ENCODE measurements at regions of chr19 and their contacts with region 1.

Region 1: GRCh38 chr19:47296036-47296435 is 13.6 kb upstream of the C5AR1 start:
- DNase-seq: peak; percentile 68
- ATAC-seq: peak; percentile 73 to 86

Region 2: DNA sequence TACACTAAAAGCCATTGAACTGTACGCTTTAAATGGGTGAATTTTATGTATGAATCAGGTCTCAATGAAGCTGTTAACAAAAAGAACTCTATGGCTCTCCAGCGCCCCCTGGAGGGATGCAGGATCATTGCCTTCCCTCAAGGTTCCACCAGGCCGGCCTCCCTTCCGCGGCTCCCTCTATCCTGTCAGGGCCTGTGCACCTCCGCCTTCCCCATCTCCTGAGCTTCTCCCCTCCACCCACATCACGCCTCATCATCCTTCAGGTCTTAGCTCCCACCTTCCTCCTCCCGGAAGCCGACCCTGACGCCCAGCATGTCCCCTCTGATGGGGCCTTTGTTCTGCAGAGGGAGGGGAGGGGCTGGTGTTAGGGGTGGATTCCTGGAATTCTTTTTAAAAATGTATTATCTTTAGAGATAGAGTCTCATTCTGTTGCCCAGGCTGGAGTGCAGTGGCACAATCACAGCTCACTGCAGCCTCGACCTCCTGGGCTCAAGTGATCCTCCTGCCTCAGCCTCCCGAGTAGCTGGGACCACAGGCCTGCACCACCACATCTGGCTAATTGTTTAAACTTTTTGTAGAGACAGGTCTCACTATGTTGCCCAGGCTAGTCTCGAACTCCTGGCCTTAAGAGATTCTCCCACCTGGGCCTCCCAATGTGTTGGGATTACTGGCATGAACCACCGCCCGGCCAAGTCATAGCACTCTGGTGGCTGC is 95.6 kb after region 1 on chr19:
- intact Hi-C with region 1: loop called (anchors 2 to 5 kb)
- DNase-seq: peak; percentile 75
- ATAC-seq: peak; percentile 57 to 78

Region 3: DNA sequence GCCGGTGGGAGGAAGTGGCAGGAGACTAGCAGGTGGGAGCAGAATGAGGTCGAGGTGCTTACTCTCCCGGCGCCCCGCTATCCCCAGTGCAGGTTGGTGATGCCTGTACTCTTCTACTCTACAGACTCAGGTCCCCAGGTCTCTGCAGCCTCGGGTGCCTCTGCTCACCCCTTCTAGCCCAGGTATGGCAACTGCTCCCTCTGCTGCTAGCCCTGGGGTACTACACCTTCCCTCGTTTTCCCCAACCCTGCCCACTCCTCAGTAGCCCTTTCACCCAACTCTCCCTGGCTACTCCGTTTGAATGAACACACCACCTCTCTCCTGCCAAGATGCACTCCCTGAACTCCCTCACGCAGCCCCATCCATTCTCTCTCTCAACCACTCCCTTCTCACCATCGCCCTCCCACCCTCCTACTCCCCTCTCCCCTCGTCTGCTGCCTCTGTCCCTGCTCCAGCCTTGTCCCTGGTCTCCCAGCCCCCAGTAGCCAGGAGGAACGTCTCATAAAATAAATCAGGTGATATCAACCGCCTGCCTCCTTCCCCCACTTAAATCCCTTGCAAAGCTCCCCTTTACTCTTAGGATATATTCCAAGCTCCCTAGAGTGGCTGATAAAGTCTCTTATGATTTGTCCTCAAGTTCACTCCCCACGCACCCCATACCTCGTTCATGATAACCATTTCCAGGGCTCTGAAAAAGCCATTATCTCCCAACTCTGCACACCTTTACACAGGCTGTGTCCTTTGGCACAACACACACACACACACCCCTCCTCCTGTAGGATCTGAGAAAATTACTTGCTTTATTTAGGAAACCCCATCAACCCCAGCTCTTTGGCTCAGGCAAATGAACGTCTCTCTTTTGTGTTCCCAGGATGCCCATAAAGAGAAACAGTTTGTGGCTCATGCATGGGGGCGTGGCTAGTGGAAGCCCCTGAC is 131.5 kb after region 1 on chr19:
- intact Hi-C with region 1: loop called in 1 of 2 experiments (anchors 2 kb)
- DNase-seq: no peak
- ATAC-seq: peak; percentile 67 to 70

Region 4: DNA sequence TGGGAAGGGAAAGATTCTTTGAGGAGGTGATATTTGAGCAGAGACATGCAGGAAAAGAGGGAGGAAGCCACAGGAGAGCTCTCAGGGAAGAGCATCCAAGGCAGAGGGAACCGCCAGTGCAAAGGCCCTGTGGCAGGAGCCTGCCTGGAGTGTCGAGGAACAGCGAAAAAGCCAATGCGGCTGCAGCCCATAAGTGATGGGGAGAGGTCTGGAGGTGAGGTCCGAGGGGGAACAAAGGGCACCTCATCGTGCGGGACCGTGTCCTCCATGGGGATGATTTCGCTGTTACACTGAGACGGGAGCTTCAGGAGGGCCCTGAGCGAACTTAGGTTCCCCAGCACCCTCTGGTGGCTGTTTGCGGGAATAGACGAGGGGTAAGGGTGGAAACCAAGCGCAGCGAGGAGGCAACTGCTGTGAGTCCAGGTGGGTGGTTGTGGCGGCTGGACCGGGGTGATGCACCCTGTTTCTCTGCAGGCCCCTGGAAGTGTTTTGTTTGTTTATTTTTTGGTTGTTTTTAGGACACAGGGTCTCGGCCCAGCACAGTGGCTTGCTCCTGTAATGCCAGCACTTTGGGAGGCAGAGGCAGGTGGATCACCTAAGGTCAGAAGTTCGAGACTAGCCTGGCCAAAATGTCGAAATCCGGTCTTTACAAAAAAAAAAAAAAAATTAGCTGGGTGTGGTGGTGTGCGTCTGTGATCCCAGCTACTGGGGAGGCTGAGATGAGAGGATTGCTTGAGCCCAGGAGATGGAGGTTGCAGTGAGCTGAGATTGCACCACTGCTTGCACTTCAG is 411.3 kb after region 1 on chr19:
- intact Hi-C with region 1: loop called in 1 of 2 experiments (anchors 10 kb)
- DNase-seq: peak; percentile 75
- ATAC-seq: peak; percentile 85 to 87